Activated CD4-positive, alpha-beta T cell treated with anti-CD3 and anti-CD28 coated beads for 36 hours (primary cell): ENCODE measurements at regions of chr4 and their contacts with region 1.

Region 1: DNA sequence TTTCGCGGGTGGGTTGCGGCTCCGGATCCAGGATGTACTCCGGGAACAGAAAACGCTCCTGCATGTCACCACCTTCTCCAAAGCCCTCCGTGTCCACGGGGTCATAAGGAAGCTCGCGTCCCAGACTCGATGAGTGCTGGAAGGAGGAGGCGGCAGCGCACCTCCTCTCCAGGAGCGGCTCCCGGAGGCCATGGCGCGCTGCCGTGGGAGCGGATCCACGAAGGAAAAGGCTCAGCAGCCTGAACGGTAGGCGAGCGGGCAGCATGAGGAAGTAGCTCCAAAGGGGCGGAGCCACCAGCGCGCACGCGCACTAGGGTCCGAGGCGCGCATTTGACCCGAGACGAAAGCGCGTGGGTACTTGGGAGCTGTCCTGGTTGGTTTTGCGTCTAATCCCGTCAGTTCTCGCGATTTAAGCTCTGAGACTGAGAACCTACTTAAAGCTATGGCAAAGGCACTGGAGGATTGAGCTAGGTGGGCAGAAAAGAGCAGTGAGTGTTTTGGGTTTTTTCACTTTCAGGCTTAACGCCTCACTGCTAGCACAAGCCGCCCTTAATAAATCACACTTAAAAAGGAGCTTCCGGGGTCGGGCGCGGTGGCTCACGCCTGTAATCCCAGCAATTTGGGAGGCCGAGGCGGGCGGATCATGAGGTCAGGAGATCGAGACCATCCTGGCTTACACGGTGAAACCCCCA is at the start of gene NOA1:
- DNase-seq: peak; percentile 98
- ATAC-seq: peak; percentile 84
- H3K4me3 Mint-ChIP-seq: peak within 1 kb of the TSS; percentile 88
- H3K27ac Mint-ChIP-seq: peak within 1 kb of the TSS; percentile 97
- H3K4me1 Mint-ChIP-seq: peaks cover 51% of the 10 kb centered on the region
- H3K27me3 Mint-ChIP-seq: no peaks in the 10 kb centered on the region
- total RNA-seq, gene NOA1: 24.9 to 31.5 TPM

Region 2: GRCh38 chr4:55546756-55547465 is 1430.6 kb before region 1 on chr4 and contains the start of gene CLOCK:
- CTCF ChIA-PET with region 1: no interaction called
- POLR2A ChIA-PET with region 1: no interaction called
- intact Hi-C with region 1: loop called in 1 of 2 experiments (anchors 5 kb)
- DNase-seq: peak; percentile 90
- ATAC-seq: peak; percentile 77
- H3K4me3 Mint-ChIP-seq: peak within 1 kb of the TSS; percentile 90
- H3K27ac Mint-ChIP-seq: peak within 1 kb of the TSS; percentile 86
- H3K4me1 Mint-ChIP-seq: peaks cover 46% of the 10 kb centered on the region
- H3K27me3 Mint-ChIP-seq: peaks cover 7% of the 10 kb centered on the region
- total RNA-seq, gene CLOCK: 10.4 to 13.3 TPM

Region 3: DNA sequence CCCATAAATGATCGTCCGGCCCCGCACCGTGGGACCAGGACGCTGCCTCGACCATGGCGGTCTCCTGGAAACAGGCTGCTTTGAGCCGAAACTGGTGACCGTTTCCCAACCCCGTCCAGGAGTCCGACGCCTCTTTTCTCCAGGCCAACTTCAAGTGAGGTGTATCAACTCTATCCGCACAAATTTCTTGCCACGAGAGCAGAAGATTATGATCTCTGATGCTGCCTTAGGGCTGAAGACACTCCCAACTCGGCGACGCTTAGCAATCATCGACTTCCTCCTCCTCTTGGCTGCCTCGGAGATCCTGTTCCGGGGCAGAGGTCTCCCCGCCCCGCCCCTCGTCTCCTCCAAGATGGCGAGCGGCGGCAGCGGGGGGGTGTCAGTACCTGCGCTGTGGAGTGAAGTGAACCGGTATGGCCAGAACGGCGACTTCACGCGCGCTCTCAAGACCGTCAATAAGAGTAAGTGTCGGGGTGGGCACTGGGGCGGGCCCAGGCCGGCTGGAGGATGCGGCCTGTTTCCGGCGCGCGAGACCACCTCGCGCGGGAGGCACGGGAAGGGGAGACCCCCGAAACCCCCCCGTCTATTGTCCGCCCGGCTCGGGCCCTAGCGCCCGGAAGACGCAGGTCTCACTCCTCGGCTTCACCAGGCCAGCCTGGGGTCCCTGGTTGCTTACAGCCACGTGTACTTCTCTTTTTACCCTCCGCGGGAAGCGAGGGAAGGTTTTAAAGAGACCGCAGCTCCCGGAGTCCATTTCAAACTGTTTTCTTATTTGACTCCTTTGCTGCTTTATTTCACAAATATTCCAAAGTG is 510.0 kb before region 1 on chr4 and contains the start of gene SRP72:
- CTCF ChIA-PET with region 1: no interaction called
- POLR2A ChIA-PET with region 1: interaction called, 7 read pairs
- intact Hi-C with region 1: loop called in 1 of 2 experiments (anchors 1 kb)
- DNase-seq: peak; percentile 94
- ATAC-seq: peak; percentile 92
- H3K4me3 Mint-ChIP-seq: peak within 1 kb of the TSS; percentile 100
- H3K27ac Mint-ChIP-seq: peak within 1 kb of the TSS; percentile 99
- H3K4me1 Mint-ChIP-seq: peaks cover 50% of the 10 kb centered on the region
- H3K27me3 Mint-ChIP-seq: no peaks in the 10 kb centered on the region
- total RNA-seq, gene SRP72: 181 to 204 TPM

Region 4: GRCh38 chr4:56723201-56723605 is 254.3 kb before region 1 on chr4:
- CTCF ChIA-PET with region 1: no interaction called
- POLR2A ChIA-PET with region 1: no interaction called
- intact Hi-C with region 1: loop called in 1 of 2 experiments (anchors 5 kb)
- DNase-seq: peak; percentile 80
- ATAC-seq: peak; percentile 97
- H3K4me3 Mint-ChIP-seq: peak overlapping the region; percentile 4
- H3K27ac Mint-ChIP-seq: peak overlapping the region; percentile 87
- H3K4me1 Mint-ChIP-seq: peaks cover 23% of the 10 kb centered on the region
- H3K27me3 Mint-ChIP-seq: no peaks in the 10 kb centered on the region

Region 5: DNA sequence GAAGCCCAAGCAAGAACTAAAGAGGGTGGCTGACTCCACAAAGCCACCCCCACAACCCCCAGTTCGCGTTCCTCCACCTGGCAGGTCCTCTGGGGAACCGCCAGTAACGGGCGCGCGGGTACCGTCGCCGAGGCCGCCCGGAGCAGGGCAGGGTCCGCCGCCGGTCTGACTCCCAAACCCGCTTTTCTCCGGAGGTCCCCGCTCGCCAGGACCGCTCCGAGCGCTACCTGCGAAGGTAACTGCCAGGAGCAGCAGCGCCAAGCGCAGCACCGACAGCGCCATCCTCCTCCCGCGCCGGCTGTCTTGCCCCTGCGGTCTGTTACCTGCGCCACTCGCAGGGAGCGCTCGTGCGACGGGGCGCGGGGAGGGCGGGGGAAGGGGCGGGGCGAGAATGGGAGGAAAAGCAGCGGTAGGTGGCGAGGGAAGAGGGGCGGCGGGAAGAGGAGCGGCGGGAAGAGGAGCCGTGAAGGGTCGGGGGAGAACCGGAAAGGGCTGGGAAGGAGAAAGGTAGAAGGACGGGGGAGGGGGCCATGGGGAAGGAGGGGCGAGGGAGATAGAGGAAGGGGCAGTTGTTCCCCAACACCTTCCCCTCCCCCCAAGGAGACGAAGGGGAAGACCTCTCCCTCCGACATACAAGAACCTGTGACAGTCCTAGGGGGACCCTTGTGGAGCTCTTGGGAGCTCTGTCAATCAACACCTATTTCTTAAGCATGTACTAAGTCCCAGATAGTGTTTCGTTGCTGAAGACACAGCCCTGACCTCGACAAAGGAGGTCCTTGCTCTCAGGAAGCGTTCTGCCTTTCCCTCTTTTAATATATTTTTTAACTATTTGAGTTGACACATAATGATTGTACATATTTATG is 155.9 kb before region 1 on chr4 and contains the start of gene SPINK2:
- CTCF ChIA-PET with region 1: no interaction called
- POLR2A ChIA-PET with region 1: interaction called, 7 read pairs
- intact Hi-C with region 1: loop called in 1 of 2 experiments (anchors 5 kb)
- DNase-seq: peak; percentile 83
- ATAC-seq: peak; percentile 79
- H3K4me3 Mint-ChIP-seq: peak within 1 kb of the TSS; percentile 69
- H3K27ac Mint-ChIP-seq: no peak within 1 kb of the TSS
- H3K4me1 Mint-ChIP-seq: peaks cover 34% of the 10 kb centered on the region
- H3K27me3 Mint-ChIP-seq: peaks cover 11% of the 10 kb centered on the region
- total RNA-seq, gene SPINK2: 1.3 to 1.9 TPM

Region 6: DNA sequence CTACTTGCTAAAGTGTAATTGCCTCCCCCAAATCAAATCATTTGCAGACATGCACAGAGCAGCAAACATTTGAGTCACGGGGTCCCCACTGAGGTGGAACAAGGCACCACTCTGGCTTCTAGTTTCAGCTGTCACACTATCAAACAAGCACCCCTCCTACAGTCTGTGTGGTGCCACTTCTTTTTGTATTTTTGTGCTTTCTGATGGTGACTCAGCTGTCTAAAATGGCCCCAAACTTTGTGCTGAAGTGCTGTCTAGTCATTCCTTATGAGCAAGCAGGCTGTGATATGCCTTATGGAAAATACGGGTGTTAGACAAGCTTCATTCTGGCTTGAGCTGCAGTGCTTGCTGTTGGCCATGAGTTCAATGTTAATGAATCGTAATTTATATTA is 117.4 kb after region 1 on chr4:
- CTCF ChIA-PET with region 1: no interaction called
- POLR2A ChIA-PET with region 1: no interaction called
- intact Hi-C with region 1: no loop called
- DNase-seq: no peak
- ATAC-seq: no peak
- H3K4me3 Mint-ChIP-seq: no peak overlapping the region
- H3K27ac Mint-ChIP-seq: no peak overlapping the region
- H3K4me1 Mint-ChIP-seq: no peaks in the 10 kb centered on the region
- H3K27me3 Mint-ChIP-seq: peaks cover 6% of the 10 kb centered on the region

Region 7: GRCh38 chr4:57342411-57342810 is 364.9 kb after region 1 on chr4:
- CTCF ChIA-PET with region 1: no interaction called
- POLR2A ChIA-PET with region 1: no interaction called
- intact Hi-C with region 1: no loop called
- DNase-seq: no peak
- ATAC-seq: no peak
- H3K4me3 Mint-ChIP-seq: no peak overlapping the region
- H3K27ac Mint-ChIP-seq: no peak overlapping the region
- H3K4me1 Mint-ChIP-seq: no peaks in the 10 kb centered on the region
- H3K27me3 Mint-ChIP-seq: no peaks in the 10 kb centered on the region